Activated naive CD4-positive, alpha-beta T cell treated with anti-CD3 and anti-CD28 coated beads for 36 hours (primary cell): ENCODE measurements at regions of chr4 and their contacts with region 1.

Region 1: DNA sequence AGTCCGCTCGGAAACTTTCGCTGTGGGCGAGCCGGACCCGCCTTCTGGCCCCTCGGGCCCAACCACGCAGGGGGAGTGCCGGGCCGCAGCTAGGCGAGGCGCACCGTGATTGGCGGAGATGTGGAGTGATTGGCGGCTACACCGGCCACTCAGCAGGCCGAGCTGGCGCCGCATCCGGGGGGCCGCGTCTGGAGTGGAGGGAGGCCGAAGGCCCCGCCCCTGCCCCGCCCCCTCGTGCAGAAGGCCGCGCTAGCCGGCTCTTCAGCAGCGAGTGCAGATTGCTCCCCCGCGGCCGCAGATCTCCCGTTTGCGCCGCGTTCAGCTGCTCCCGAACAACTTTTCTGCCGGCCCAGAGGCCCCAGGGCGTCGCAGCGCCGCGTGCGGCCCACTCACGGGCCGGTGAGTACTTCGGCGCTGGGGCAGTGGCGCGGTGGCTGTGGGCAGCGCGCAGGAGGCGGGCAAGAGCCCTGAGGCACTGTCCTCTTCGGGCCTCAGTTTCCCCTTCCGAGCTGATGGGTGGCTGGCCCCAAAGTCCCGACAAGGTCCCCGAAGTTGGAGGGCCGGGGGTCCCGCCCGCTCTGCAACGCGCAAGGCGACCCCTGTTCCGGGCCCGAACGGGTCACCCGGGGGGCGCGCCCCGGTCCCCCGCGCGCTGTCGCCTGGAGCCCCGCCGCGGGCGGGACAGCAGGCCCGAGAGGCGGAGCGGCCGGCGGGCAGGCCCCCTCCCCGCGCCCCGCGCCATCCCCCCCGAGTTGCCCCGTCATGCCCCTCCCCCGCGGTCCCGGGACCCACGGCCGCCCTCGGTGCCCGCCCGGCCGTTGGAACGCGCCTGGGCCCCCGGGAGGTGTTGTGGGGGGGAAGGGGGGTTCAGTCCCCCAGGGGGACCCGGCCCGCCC is at the start of gene WFS1:
- DNase-seq: peak; percentile 98
- H3K4me3 Mint-ChIP-seq: peak within 1 kb of the TSS; percentile 75
- H3K27ac Mint-ChIP-seq: no peak within 1 kb of the TSS
- H3K4me1 Mint-ChIP-seq: peaks cover 13% of the 10 kb centered on the region
- H3K27me3 Mint-ChIP-seq: peaks cover 2% of the 10 kb centered on the region
- total RNA-seq, gene WFS1: 3.6 to 4.5 TPM

Region 2: DNA sequence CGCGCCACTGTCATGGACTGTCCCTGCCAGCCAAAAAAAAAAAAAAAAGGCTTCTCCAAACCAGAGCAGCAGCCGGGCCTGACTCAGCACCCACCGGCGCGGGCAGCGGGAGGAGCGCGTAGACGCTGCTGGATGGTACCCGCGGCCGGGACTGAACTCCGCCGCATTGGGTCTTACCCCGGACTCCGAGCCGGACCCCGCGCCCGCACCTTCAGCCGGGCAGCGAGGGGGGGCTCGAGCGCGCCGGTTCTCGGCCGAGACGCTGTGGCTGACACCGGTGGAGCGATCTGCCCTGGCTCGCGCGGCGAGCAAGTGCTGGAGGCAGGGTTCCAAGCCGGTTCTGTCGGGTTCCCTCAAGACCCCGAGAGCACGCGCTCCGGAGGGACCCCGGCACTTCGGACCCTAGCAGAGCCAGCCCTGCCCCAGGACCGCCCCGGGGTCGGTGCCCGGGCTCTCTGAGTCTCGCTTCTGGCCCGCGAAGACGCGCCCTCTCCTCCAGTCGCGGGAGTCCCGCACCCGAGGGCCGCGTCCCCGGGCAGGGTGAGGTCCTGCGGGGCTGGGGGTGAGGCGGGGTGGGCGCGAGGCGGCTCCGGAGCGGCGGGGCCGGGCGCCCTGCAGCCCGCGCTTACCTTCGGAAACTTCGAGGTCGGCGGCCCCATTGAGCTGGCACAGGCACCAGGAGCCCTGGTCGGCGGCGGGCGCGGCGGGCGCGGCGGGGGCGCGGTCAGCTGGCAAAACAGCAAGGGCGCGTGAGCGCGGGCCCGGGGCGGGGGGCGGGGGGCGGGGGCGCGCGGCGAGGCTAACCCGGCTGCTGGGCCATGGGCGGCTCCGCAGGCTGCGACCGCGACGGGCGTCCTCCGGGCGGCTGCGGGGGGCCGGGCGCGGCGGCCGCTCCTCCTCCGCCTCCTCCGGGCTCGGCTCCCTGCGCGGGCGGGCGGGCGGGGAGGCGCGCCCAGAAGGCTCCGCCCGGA is 293.4 kb after region 1 on chr4:
- CTCF ChIA-PET with region 1: no interaction called
- intact Hi-C with region 1: loop called (anchors 5 kb)
- DNase-seq: peak; percentile 15
- H3K4me3 Mint-ChIP-seq: no peak overlapping the region
- H3K27ac Mint-ChIP-seq: no peak overlapping the region
- H3K4me1 Mint-ChIP-seq: peaks cover 13% of the 10 kb centered on the region
- H3K27me3 Mint-ChIP-seq: peaks cover 42% of the 10 kb centered on the region